OCI-LY7 (cell line): ENCODE measurements at regions of chr5 and their contacts with region 1.

Region 1: GRCh38 chr5:154467655-154468354 is 10.2 kb downstream of the HAND1 start:
- DNase-seq: peak; percentile 69
- H3K4me3 ChIP-seq: no peak overlapping the region
- H3K27ac ChIP-seq: no peak overlapping the region
- H3K4me1 ChIP-seq: no peaks in the 10 kb centered on the region
- CTCF ChIP-seq: peak; percentile 94

Region 2: GRCh38 chr5:154575546-154576428 is 108.0 kb after region 1 on chr5:
- CTCF ChIA-PET with region 1: interaction called, 3 read pairs
- POLR2A ChIA-PET with region 1: interaction called, 4 read pairs
- intact Hi-C with region 1: loop called (anchors 1 kb)
- DNase-seq: peak; percentile 79
- H3K4me3 ChIP-seq: peak overlapping the region; percentile 35
- H3K27ac ChIP-seq: no peak overlapping the region
- H3K4me1 ChIP-seq: peaks cover 19% of the 10 kb centered on the region
- CTCF ChIP-seq: peak; percentile 79